GM12878 (cell line): ENCODE measurements at regions of chr13 and their contacts with region 1.

Region 1: DNA sequence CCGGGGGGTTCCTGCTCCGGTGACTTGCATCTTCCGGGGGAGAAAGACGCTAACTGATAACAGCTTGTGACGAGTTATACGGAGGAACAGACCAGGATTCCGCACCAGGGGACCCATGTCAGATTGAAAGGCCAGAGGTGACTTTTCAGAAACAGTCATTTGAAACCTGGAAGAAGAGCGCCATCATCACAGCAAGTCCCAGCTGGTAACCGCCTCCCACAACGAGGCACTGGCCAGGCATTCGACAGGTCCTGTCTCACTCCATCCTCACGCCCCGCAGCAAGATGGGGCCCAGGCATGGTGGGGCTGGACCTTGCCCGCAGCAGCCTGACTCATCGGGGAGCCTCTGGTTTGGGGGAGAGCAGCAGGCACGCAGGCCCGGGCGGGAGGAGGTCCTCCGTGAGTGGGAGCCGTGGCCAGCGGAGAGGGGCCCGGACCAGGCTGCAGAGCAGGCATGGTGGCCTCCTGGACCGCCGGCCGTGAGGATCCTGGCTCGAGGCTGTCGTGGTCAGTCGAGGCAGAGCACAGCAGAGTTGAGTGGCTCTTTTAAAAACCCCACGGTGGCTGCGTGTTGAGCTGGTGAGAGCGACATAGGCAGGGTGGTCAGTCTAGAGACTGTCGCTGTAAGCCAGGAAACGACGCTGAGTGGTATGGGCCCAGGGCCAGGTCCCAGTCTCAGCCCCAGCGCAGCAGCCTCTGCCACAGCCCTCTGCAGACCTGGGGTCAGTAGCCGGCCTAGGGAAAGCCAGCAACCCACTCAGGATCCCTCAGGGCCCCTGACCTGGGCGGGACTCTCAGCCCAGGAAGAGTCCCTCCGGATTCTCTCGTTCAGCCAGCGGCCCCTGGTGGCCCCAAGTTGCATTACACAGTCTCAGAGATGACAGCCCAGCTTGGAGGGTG is 94.9 kb upstream of the MCF2L start:
- DNase-seq: no peak
- ATAC-seq: peak; percentile 96
- H3K4me3 ChIP-seq: no peak overlapping the region
- H3K27ac ChIP-seq: 0 out of 2 replicates have a peak overlapping the region, but pooled peaks have one; percentile 44
- H3K4me1 ChIP-seq: peaks cover 24% of the 10 kb centered on the region
- H3K27me3 ChIP-seq: no peaks in the 10 kb centered on the region
- CTCF ChIP-seq: peak; percentile 88 to 97 (median 95)
- EP300 ChIP-seq: no peak
- POLR2A ChIP-seq: 0 out of 2 replicates have a peak, but pooled peaks have one; percentile 23
- RAD21 ChIP-seq: peak; percentile 96

Region 2: DNA sequence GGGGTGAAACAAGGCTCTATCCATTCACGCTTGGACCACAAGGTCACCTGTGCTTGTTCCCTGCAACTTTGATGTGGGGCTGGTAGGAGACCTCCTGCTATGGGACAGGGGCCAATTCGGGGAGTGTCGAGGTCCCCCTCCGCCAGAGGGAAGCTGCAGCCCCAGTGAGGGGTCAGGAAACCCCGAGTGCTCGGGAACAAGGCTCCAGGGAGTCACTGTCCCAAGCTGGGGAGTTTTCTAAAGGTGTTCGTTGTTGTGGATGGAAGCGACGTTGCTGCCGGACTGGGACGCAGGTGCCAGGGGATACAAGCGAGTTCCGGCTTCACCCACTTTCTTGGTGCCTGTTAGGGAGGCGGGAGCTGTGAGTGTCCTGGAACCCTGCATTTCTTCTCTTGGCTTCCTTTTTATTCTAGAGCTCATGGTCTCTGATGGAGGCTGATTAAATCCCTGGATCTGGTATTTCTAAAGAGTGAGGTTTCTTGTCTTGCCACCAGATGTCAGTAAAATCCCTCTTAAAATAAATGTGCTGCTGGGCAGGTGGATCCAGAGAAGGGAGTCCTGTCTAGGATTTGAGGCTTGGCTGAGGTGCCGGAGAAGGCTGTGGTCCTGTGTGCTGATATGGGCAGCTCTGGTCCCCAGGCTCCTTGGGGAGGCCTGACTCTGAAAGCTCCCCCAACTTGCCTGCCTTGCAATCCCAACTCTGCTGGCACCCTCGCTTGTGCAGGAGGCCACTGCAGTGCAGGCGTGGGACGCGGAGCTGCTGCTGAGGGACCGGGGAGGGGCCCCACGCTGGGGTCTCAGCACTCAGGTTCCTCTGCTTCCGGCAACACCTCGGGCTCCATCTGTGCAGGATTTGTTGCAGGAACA is 1399.7 kb before region 1 on chr13:
- CTCF ChIA-PET with region 1: no interaction called
- POLR2A ChIA-PET with region 1: no interaction called
- RAD21 ChIA-PET with region 1: no interaction called
- SMC1A ChIA-PET with region 1: no interaction called
- in situ Hi-C with region 1: loop called (anchors 25 kb)
- intact Hi-C with region 1: no loop called
- DNase-seq: no peak
- ATAC-seq: peak; percentile 68
- H3K4me3 ChIP-seq: no peak overlapping the region
- H3K27ac ChIP-seq: no peak overlapping the region
- H3K4me1 ChIP-seq: no peaks in the 10 kb centered on the region
- H3K27me3 ChIP-seq: no peaks in the 10 kb centered on the region
- CTCF ChIP-seq: peak; percentile 39 to 51 (median 40); a peak in 5 of 6 replicates
- EP300 ChIP-seq: no peak
- POLR2A ChIP-seq: no peak
- RAD21 ChIP-seq: peak; percentile 75

Region 3: GRCh38 chr13:112629161-112629560 is 244.9 kb before region 1 on chr13:
- CTCF ChIA-PET with region 1: interaction called, 11 read pairs
- POLR2A ChIA-PET with region 1: no interaction called
- RAD21 ChIA-PET with region 1: no interaction called
- SMC1A ChIA-PET with region 1: interaction called, 3 read pairs
- in situ Hi-C with region 1: no loop called
- intact Hi-C with region 1: no loop called
- DNase-seq: no peak
- ATAC-seq: no peak
- H3K4me3 ChIP-seq: no peak overlapping the region
- H3K27ac ChIP-seq: no peak overlapping the region
- H3K4me1 ChIP-seq: no peaks in the 10 kb centered on the region
- H3K27me3 ChIP-seq: no peaks in the 10 kb centered on the region; a peak in 1 of 4 replicates
- CTCF ChIP-seq: no peak
- EP300 ChIP-seq: no peak
- POLR2A ChIP-seq: no peak
- RAD21 ChIP-seq: no peak

Region 4: DNA sequence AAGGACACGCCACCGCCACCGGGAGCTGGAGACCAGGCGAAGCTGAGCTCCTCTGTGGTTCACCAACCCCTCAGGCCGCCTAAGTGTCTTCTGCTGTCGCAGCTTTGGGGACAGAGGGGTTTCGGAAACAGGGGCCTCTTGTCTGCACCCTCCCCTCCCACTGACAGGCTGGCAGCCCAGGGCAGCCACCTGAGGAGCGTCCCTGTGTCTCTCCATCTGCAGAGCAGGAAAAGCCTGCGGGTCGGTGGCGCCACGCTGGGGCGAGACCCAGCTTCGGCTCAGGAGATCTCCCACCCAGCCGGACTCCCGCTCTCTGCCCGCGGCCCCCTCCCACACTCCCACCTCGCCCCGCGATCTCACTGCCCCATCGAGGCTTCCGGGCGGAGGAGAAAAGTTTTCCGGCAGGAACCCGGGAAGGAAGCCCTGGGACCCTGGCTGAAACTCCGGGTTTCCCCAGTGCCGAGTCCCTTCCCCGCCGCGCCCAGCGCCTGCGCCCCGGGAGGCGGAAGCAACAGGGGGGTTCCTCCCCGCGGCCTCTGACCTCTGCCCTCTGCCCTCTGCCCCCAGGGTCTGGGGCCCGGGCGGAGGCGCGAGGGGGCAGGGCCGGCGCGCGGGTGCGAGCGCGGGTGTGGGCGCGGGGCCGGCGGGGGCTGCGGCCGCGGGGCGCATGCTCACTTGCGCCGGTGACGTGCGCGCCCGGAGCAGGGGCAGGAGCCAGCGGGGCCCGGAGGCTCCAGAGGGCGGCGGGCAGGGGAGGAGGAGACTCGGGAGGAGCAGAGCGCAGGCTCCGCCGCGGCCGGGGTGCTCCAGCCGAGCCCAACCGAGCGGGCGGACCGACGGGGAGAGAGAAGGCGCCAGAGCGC is 184.6 kb before region 1 on chr13 and contains the start of gene ATP11A:
- CTCF ChIA-PET with region 1: interaction called, 7 read pairs
- POLR2A ChIA-PET with region 1: no interaction called
- RAD21 ChIA-PET with region 1: interaction called, 8 read pairs
- SMC1A ChIA-PET with region 1: interaction called, 8 read pairs
- in situ Hi-C with region 1: loop called (anchors 5 kb)
- intact Hi-C with region 1: loop called (anchors 2 kb)
- DNase-seq: no peak
- ATAC-seq: peak; percentile 73
- H3K4me3 ChIP-seq: peak within 1 kb of the TSS; percentile 77
- H3K27ac ChIP-seq: peak within 1 kb of the TSS; percentile 64
- H3K4me1 ChIP-seq: peaks cover 27% of the 10 kb centered on the region
- H3K27me3 ChIP-seq: no peaks in the 10 kb centered on the region
- CTCF ChIP-seq: peak in 2 of 3 experiments; percentile 5 to 11; a peak in 2 of 6 replicates
- EP300 ChIP-seq: 0 out of 4 replicates have a peak, but pooled peaks of 1 of the 2 experiments have one; percentile 7
- POLR2A ChIP-seq: peak; percentile 88
- RAD21 ChIP-seq: no peak
- polyA plus RNA-seq, gene ATP11A: 1.4 to 2.1 TPM

Region 5: DNA sequence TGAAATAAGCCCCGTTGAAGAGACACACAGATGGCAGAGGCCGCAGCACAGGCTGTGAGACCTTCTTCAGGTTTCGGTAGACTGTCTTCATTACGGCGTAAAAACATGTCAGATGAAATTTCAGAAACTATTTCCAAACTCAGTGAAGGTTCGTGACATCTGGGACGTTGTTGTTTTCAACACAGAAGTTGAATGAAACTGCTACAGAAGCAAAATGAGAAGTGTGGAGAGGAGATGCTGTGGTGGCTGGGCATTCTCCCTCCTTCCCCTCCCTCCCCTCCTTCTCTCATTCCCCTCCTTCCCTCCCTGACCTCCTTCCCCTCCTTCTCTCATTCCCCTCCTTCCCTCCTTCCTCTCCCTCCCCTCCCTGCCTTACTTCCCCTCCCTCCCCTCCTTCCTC is 70.7 kb before region 1 on chr13:
- CTCF ChIA-PET with region 1: interaction called, 5 read pairs
- POLR2A ChIA-PET with region 1: no interaction called
- RAD21 ChIA-PET with region 1: no interaction called
- SMC1A ChIA-PET with region 1: interaction called, 4 read pairs
- in situ Hi-C with region 1: no loop called
- intact Hi-C with region 1: loop called (anchors 2 kb)
- DNase-seq: peak; percentile 70
- ATAC-seq: peak; percentile 72
- H3K4me3 ChIP-seq: peak overlapping the region; percentile 42; the same call in 1 of the 2 replicates
- H3K27ac ChIP-seq: peak overlapping the region; percentile 91
- H3K4me1 ChIP-seq: peaks cover 16% of the 10 kb centered on the region; the same call in 1 of the 2 replicates
- H3K27me3 ChIP-seq: no peaks in the 10 kb centered on the region
- CTCF ChIP-seq: no peak
- EP300 ChIP-seq: no peak; a peak in 1 of 4 replicates
- POLR2A ChIP-seq: no peak
- RAD21 ChIP-seq: no peak

Region 6: GRCh38 chr13:112908342-112908741 is 34.2 kb after region 1 on chr13:
- CTCF ChIA-PET with region 1: no interaction called
- POLR2A ChIA-PET with region 1: no interaction called
- RAD21 ChIA-PET with region 1: no interaction called
- SMC1A ChIA-PET with region 1: no interaction called
- in situ Hi-C with region 1: no loop called
- intact Hi-C with region 1: no loop called
- DNase-seq: no peak
- ATAC-seq: peak; percentile 23; the same call in 1 of the 3 replicates
- H3K4me3 ChIP-seq: no peak overlapping the region
- H3K27ac ChIP-seq: no peak overlapping the region
- H3K4me1 ChIP-seq: no peaks in the 10 kb centered on the region
- H3K27me3 ChIP-seq: peaks cover 0 to 5% of the 10 kb centered on the region in 2 experiments; a peak in 2 of 4 replicates
- CTCF ChIP-seq: no peak
- EP300 ChIP-seq: no peak
- POLR2A ChIP-seq: no peak
- RAD21 ChIP-seq: no peak